AG04450 (cell line): ENCODE measurements at regions of chr4 and their contacts with region 1.

Region 1: DNA sequence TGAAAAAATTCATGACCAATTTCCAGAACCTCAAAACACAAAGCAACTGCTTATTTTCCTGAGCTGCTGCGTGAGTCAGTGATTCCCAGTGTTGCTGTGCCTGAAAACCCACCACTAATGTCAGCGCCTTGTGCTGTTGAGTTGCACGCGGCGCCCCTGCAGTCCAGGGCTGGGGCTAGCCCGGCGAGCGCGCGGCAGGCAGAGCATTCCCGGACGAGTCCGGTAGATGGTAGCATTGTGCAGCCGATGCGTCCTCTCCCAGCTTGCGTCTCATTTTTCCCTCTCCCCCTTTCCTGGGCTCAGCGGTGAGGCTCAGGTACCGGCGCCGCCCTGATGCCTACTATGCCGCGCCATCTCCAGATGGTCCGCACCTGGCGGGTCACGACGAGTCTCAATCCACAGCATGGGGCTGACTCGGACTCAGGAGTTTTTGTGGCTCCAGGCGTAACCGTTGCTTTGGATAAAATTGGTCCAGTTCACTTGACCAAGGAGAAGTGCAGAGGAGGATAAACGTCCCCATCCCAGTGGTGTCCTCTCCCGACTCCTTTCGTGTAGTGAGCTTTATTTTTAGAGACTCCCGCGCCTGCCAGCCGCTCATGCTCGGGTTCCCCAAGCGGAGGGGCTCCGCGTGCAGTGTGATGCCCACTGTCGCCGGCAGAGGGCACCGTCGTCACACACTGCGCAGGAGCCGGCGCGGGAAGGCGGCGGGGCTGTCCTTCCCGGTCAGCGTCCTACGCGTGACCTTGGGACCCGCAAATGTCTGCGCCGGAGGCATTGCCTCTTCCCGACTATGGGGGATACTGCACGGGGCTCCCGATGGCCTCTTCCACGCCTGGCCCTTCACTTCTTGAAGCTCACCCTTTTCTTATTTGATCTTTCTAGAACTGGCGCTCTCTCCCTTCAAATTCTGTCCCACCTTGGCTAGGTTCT is 53.6 kb upstream of the IGFBP7 start:
- DNase-seq: peak; percentile 60
- H3K4me3 ChIP-seq: peak overlapping the region; percentile 82
- H3K27ac ChIP-seq: no peak overlapping the region
- H3K27me3 ChIP-seq: peaks cover 9% of the 10 kb centered on the region
- CTCF ChIP-seq: peak; percentile 83

Region 2: DNA sequence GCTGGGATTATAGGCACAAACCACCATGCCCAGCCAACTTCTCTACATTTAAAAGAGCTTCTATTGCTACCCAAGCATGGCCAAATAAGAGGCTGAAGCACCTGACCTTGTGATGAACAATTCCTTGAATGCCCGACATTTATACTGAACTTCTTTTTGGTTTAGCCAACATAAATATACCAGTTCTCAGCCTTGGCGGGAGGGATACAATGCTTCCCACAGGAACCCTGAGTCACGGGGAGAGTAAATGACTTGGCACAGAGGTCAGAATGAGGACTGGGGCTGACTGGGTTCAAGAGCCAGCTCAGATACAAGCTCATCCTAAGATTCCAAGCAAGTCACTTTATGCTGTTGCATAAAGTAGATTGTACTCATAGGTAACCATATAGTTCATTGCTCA is 488.8 kb before region 1 on chr4:
- CTCF ChIA-PET with region 1: no interaction called
- POLR2A ChIA-PET with region 1: no interaction called
- DNase-seq: no peak
- H3K4me3 ChIP-seq: no peak overlapping the region
- H3K27ac ChIP-seq: no peak overlapping the region
- H3K27me3 ChIP-seq: peaks cover 26% of the 10 kb centered on the region
- CTCF ChIP-seq: no peak

Region 3: GRCh38 chr4:57037982-57038604 is 125.7 kb before region 1 on chr4:
- CTCF ChIA-PET with region 1: interaction called, 179 read pairs
- POLR2A ChIA-PET with region 1: no interaction called
- DNase-seq: no peak
- H3K4me3 ChIP-seq: no peak overlapping the region
- H3K27ac ChIP-seq: no peak overlapping the region
- H3K27me3 ChIP-seq: no peaks in the 10 kb centered on the region
- CTCF ChIP-seq: peak; percentile 98

Region 4: DNA sequence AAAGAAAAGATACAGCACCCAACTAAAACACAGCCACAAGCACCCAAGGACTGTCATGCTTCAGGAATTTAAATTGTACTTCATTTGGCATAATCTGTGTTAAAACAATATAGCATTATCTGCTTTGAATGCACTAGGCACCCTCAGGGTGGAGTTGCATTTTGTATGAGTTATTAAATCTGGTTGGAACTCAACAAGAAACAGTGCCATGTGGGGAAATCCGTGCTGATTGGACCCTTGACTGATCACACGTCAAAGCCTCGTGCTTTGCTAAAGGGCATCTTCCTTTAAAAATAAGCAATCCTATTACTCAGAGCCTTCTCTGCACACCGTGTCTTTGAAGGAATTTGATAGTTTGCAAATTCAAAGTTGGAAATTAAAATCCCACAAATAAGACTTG is 89.1 kb before region 1 on chr4:
- CTCF ChIA-PET with region 1: interaction called, 20 read pairs
- POLR2A ChIA-PET with region 1: no interaction called
- DNase-seq: peak; percentile 74
- H3K4me3 ChIP-seq: no peak overlapping the region
- H3K27ac ChIP-seq: peak overlapping the region; percentile 34
- H3K27me3 ChIP-seq: no peaks in the 10 kb centered on the region
- CTCF ChIP-seq: no peak

Region 5: GRCh38 chr4:57110640-57111511 is 52.9 kb before region 1 on chr4:
- CTCF ChIA-PET with region 1: interaction called, 19 read pairs
- POLR2A ChIA-PET with region 1: no interaction called
- DNase-seq: no peak
- H3K4me3 ChIP-seq: peak overlapping the region; percentile 75
- H3K27ac ChIP-seq: peak overlapping the region; percentile 94
- H3K27me3 ChIP-seq: no peaks in the 10 kb centered on the region
- CTCF ChIP-seq: no peak

Region 6: GRCh38 chr4:57182132-57182874 is 18.5 kb after region 1 on chr4:
- CTCF ChIA-PET with region 1: interaction called, 11 read pairs
- POLR2A ChIA-PET with region 1: no interaction called
- DNase-seq: no peak
- H3K4me3 ChIP-seq: no peak overlapping the region
- H3K27ac ChIP-seq: no peak overlapping the region
- H3K27me3 ChIP-seq: peaks cover 3% of the 10 kb centered on the region
- CTCF ChIP-seq: no peak

Region 7: DNA sequence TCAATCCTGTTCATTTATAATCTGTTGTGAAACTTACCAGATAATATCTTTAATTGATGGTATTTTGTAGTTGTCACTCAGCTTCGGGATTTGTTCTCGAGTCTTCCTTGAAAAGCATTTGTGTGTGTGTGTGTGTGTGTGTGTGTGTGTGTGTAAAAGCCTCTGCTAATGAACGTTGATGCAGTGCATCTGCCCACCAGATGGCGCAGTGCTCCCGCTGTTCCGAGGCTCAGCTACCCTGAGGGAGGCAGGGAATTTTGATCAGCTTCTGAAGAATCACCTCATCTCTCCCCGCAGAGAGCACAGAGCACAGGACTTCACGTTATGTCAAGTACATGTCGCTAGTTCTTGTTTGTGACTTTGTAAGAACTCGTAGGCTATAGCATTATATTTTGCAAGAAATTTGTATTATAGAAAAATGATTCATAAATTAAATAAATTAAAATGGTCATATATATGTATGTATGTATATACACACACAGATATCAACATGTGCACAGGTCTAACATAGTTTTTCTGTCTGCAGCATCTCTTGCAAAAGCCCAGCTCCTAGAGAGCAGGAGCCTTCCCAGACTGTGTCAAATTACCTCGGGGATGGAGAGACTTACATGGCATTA is 263.1 kb after region 1 on chr4:
- CTCF ChIA-PET with region 1: interaction called, 39 read pairs
- POLR2A ChIA-PET with region 1: no interaction called
- DNase-seq: peak; percentile 36
- H3K4me3 ChIP-seq: no peak overlapping the region
- H3K27ac ChIP-seq: no peak overlapping the region
- H3K27me3 ChIP-seq: no peaks in the 10 kb centered on the region
- CTCF ChIP-seq: peak; percentile 83